Sciatic nerve (tissue), 2 donors: ENCODE measurements at regions of chr7 and their contacts with region 1.

Region 1: DNA sequence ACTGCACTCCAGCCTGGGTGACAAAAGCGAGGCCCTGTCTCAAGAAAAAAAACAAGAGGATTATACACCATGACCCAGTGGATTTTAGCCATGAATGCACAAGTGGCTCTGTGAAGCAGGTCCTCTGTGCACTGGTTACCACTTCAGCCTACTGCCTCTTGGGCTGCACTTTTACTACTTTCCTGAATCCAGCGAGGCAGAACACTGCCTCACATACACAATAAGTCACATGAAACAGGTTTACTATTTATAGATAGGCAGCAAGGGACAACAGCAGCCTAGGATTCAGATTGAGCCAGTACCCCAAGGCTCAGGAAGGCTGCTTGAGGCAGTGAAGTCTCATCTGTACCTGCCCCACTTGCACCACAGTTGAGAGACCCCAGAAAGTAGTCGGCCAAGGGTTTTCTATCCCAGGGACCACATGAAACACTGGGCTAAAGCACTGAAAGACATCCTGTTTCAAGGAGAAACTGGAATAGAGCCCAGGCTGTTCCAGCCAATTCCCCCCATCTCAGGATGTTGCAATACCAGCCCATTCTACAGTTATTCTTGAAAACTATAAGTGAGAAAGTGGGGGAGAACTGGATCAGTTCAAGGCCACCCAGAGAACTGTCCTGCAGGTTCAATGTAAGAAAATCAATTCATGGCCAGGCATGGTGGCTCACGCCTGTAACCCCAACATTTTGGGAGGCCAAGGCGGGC is 10.3 kb upstream of the OGDH start:
- DNase-seq: no peak
- ATAC-seq: no peak

Region 2: DNA sequence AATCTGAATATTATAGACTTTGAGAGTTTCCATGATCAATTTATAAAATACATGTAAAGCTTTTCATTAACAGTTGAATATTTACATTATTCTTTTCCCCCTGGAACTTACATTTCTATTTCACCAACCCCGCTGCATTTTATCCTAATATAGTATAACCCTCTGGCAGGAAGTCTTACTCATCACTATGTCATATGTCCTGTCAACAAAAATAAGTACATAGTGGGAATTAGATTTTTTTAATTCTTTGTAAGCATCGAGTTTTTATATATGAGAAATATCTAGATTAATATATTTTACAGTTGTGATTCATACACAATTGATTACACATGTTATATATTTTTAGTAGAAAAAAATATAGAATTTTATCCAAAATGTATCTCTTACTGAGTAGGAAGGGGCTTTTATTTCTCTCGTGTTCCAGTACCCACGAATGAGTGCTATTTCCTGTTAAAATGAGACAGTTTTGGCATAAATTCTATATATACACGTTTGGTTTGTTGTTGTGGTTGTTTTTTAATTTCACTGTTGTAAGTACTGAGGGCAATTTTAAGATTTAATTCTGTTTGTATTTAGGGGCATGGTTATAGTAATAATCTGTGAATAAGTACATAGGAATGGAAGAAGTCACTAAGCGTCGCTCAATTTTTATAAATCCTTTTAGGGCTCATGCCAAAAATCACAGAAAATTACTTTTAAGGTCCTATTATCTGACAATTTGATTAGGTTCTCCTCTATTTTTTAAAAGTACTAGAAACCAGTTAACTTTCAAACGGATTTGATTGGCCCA is 1396.5 kb before region 1 on chr7:
- intact Hi-C with region 1: no loop called
- DNase-seq: no peak
- ATAC-seq: no peak

Region 3: DNA sequence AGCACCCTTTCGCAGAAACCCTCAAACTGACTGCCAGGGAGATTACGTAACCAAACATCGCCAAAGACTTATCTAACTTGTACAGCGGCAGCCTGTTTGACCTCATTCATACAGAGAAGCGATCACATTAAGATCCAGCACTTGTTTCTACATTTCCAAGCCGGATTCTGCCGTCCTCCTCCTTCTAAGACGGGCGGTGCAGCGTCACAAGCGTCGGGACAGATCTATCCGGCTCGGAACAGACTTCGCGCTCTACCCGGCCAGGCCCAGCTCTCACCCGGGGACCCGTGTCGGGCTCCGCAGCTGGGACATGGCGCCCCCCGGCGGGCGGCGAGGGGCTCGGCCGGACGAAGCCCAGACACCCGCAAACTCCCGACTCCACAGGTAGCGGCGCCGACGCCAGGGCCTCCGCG is 251.4 kb after region 1 on chr7:
- intact Hi-C with region 1: loop called (anchors 10 kb)
- DNase-seq: peak; percentile 93
- ATAC-seq: peak; percentile 77